Cardiac septum (tissue), 1 donor: ENCODE measurements at regions of chr19 and their contacts with region 1.

Region 1: DNA sequence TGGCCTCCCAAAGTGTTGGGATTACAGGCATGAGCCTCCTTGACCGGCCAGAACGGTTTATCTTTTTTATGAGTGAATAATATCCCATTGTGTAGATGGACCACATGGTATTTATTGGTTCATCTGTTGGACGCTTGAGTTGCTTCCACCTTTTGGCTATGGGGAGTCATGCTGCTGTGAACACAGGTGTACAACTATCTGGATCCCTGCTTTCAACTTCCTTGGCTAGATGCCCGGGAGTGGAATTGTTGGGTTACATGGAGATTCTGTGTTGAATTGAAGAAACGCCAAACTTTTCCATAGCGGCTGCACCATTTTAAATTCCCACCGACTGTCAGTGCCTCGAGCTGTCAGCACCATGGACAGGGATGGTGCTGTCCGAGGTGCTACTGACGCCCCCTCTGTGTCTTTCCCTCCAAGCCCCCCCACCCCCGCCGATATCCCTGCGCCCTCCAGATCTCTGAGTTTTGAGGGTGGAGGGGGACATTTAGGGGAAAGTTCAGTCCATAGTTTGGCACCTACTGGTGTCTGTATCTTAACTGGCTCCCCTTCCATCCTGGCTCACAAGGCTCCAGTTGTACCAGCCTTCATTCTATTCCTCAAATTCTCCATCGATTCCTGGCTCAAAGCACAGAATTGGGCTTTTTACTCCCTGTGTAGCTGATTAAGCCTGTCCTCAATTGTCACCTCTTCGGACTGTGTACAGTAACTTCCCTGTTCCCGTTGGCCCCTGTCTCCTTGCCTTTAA is 27.3 kb downstream of the PNPLA6 start:
- DNase-seq: no peak

Region 2: GRCh38 chr19:7674010-7675005 is 111.5 kb after region 1 on chr19:
- intact Hi-C with region 1: loop called (anchors 5 kb)
- DNase-seq: peak; percentile 94